ENCODE measurements at regions of chr12 and their contacts with region 1.

Region 1: GRCh38 chr12:66352197-66352596 is 49.9 kb downstream of the HELB start:
- DNase-seq: peak; percentile 29
- ATAC-seq: no peak
- H3K4me3 ChIP-seq: no peak overlapping the region
- H3K4me3 Mint-ChIP-seq: no peak overlapping the region
- H3K27ac ChIP-seq: no peak overlapping the region
- H3K27ac Mint-ChIP-seq: no peak overlapping the region
- H3K4me1 ChIP-seq: no peaks in the 10 kb centered on the region
- H3K4me1 Mint-ChIP-seq: no peaks in the 10 kb centered on the region
- H3K27me3 ChIP-seq: no peaks in the 10 kb centered on the region
- H3K27me3 Mint-ChIP-seq: no peaks in the 10 kb centered on the region
- CTCF ChIP-seq: peak; percentile 45

Region 2: GRCh38 chr12:66257990-66258389 is 94.2 kb before region 1 on chr12:
- CTCF ChIA-PET with region 1: no interaction called
- POLR2A ChIA-PET with region 1: no interaction called
- intact Hi-C with region 1: no loop called
- DNase-seq: no peak
- ATAC-seq: no peak
- H3K4me3 ChIP-seq: no peak overlapping the region
- H3K4me3 Mint-ChIP-seq: no peak overlapping the region
- H3K27ac ChIP-seq: no peak overlapping the region
- H3K27ac Mint-ChIP-seq: no peak overlapping the region
- H3K4me1 ChIP-seq: no peaks in the 10 kb centered on the region
- H3K4me1 Mint-ChIP-seq: no peaks in the 10 kb centered on the region
- H3K27me3 ChIP-seq: no peaks in the 10 kb centered on the region
- H3K27me3 Mint-ChIP-seq: no peaks in the 10 kb centered on the region
- CTCF ChIP-seq: no peak

Region 3: DNA sequence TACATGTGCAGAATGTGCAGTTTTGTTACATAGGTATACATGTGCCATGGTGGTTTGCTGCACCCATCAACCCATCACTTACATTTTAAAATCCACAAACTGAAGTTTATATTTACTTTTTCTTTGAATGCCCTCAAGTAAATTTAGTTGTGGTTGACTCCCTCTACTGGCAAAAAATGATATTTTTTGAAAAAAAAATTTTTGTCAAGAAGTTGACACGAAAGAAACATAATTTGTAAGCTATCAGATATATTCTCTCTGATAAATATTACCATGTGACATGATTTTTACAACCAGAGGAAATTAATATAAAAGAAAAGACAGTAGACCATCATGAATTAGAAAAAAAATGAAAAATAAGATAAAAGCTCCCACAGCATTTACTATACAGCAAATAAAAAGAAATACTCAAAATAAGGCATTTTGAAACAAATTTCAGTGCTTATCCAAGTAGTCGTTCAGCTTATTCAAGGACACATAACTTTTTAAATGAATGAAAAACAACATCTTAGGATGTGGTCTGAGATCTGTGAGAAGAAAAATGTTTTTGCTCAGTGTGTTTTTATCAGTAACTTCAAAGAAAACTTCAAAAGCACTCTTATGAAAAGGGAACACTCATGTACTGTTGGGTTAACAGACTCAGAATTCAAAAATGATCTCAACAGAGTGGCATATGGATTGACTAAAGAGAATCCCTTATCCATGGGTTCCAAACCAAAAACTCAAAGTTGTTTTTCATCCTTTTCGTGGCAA is 356.7 kb after region 1 on chr12:
- CTCF ChIA-PET with region 1: interaction called, 13 read pairs
- POLR2A ChIA-PET with region 1: no interaction called
- intact Hi-C with region 1: loop called (anchors 5 kb)
- DNase-seq: peak; percentile 31
- ATAC-seq: no peak
- H3K4me3 ChIP-seq: no peak overlapping the region
- H3K4me3 Mint-ChIP-seq: no peak overlapping the region
- H3K27ac ChIP-seq: no peak overlapping the region
- H3K27ac Mint-ChIP-seq: no peak overlapping the region
- H3K4me1 ChIP-seq: peaks cover 6 to 15% of the 10 kb centered on the region in 2 donors
- H3K4me1 Mint-ChIP-seq: peaks cover 16% of the 10 kb centered on the region
- H3K27me3 ChIP-seq: no peaks in the 10 kb centered on the region
- H3K27me3 Mint-ChIP-seq: no peaks in the 10 kb centered on the region
- CTCF ChIP-seq: peak; percentile 82

Region 4: GRCh38 chr12:66713984-66714383 is 361.8 kb after region 1 on chr12:
- CTCF ChIA-PET with region 1: interaction called, 13 read pairs
- POLR2A ChIA-PET with region 1: no interaction called
- intact Hi-C with region 1: loop called (anchors 5 kb)
- DNase-seq: peak; percentile 11
- ATAC-seq: no peak
- H3K4me3 ChIP-seq: peak overlapping the region; percentile 0 to 70 (median 50)
- H3K4me3 Mint-ChIP-seq: peak overlapping the region; percentile 52
- H3K27ac ChIP-seq: peak overlapping the region; percentile 19 to 68
- H3K27ac Mint-ChIP-seq: no peak overlapping the region
- H3K4me1 ChIP-seq: peaks cover 6 to 21% of the 10 kb centered on the region in 2 donors
- H3K4me1 Mint-ChIP-seq: peaks cover 21% of the 10 kb centered on the region
- H3K27me3 ChIP-seq: no peaks in the 10 kb centered on the region
- H3K27me3 Mint-ChIP-seq: no peaks in the 10 kb centered on the region
- CTCF ChIP-seq: no peak

Measured in B cell (primary cell).